MCF 10A (cell line): ENCODE measurements at regions of chr2 and their contacts with region 1.

Region 1: DNA sequence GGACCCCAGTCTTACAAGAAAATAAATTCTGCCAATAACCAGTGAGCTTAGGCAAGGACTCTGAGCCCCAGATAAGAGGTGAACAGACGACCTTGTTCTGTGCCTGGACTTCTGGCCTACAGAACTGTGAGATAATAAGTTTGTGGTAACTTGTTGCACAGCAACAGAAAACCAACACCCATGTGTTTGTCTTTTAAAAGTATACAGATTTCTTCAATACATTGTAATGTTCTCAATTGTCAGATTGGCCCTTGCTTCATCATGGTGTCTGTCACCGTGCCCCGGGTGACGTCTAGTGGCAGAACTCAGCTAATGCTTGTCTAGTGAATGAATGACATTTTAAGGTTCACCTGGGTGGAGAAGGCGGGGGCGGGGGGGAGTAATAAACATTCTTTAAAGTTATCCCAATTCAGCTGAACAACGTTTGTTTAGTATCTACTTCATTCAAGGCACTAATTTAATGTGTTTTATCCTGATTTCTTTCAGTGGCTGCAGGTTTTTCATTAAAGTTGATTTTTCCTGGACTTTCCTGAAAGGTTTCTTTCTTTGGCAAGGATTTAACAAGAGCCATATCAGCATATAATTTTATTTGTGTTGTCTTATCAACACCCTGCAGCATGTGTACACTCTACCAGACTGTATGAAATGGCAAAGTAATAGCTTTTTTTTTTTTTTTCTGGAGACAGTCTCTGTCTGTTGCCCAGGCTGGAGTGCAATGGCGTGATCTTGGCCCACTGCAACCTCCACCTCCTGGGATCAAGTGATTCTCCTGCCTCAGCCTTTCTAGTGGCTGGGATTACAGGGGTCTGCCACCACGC is 123.8 kb upstream of the DLX2 start:
- DNase-seq: no peak
- H3K4me3 Mint-ChIP-seq: no peak overlapping the region
- H3K27ac Mint-ChIP-seq: no peak overlapping the region
- H3K4me1 Mint-ChIP-seq: peaks cover 55% of the 10 kb centered on the region
- H3K27me3 Mint-ChIP-seq: no peaks in the 10 kb centered on the region
- CTCF ChIP-seq: peak; percentile 23

Region 2: DNA sequence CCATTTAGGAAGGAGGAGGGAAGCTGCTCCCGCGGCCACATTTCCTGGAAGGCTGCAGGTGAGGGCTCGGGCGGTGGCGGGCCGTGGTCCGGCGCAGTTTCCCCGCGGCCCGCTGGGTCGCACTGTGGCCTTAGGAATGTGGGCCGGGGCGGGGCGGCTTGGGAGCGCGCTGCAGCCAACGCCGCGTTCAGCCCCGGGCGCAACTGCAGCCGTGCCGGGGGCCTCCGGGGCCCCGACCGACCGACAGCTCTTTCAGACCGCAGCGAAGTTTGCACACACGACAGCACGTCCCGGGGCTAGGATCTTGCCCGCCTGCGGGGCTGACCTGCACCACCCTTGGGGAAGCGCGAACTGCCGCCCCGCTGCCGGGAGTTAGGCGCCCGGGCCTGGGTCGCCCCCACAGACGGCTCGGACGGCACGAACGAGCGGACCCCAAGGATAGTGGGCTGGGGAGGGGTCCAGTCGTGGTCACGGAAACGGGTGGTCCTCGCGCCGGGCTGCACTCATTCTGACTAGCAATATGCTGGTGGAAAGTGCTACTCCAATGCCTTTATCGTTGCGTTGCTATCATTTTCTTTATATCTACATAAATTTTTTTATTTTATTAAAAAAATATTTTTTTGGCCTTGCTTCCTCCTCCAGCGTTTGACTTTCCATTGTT is 53.8 kb before region 1 on chr2:
- CTCF ChIA-PET with region 1: interaction called, 54 read pairs
- POLR2A ChIA-PET with region 1: interaction called, 65 read pairs
- intact Hi-C with region 1: loop called (anchors 1 kb)
- DNase-seq: peak; percentile 74
- H3K4me3 Mint-ChIP-seq: peak overlapping the region; percentile 66
- H3K27ac Mint-ChIP-seq: no peak overlapping the region
- H3K4me1 Mint-ChIP-seq: no peaks in the 10 kb centered on the region
- H3K27me3 Mint-ChIP-seq: no peaks in the 10 kb centered on the region
- CTCF ChIP-seq: peak; percentile 93

Region 3: GRCh38 chr2:172179045-172179701 is 47.3 kb before region 1 on chr2:
- CTCF ChIA-PET with region 1: interaction called, 54 read pairs
- POLR2A ChIA-PET with region 1: interaction called, 65 read pairs
- intact Hi-C with region 1: loop called (anchors 1 kb)
- DNase-seq: peak; percentile 89
- H3K4me3 Mint-ChIP-seq: no peak overlapping the region
- H3K27ac Mint-ChIP-seq: peak overlapping the region; percentile 9
- H3K4me1 Mint-ChIP-seq: peaks cover 28% of the 10 kb centered on the region
- H3K27me3 Mint-ChIP-seq: no peaks in the 10 kb centered on the region
- CTCF ChIP-seq: no peak

Region 4: GRCh38 chr2:172208791-172209325 is 17.6 kb before region 1 on chr2:
- CTCF ChIA-PET with region 1: interaction called, 53 read pairs
- POLR2A ChIA-PET with region 1: interaction called, 220 read pairs
- intact Hi-C with region 1: no loop called
- DNase-seq: peak; percentile 56
- H3K4me3 Mint-ChIP-seq: peak overlapping the region; percentile 41
- H3K27ac Mint-ChIP-seq: peak overlapping the region; percentile 91
- H3K4me1 Mint-ChIP-seq: peaks cover 26% of the 10 kb centered on the region
- H3K27me3 Mint-ChIP-seq: no peaks in the 10 kb centered on the region
- CTCF ChIP-seq: no peak

Region 5: GRCh38 chr2:172215172-172215935 is 11.1 kb before region 1 on chr2:
- CTCF ChIA-PET with region 1: interaction called, 53 read pairs
- POLR2A ChIA-PET with region 1: interaction called, 220 read pairs
- intact Hi-C with region 1: no loop called
- DNase-seq: peak; percentile 60
- H3K4me3 Mint-ChIP-seq: no peak overlapping the region
- H3K27ac Mint-ChIP-seq: peak overlapping the region; percentile 81
- H3K4me1 Mint-ChIP-seq: peaks cover 20% of the 10 kb centered on the region
- H3K27me3 Mint-ChIP-seq: no peaks in the 10 kb centered on the region
- CTCF ChIP-seq: no peak

Region 6: DNA sequence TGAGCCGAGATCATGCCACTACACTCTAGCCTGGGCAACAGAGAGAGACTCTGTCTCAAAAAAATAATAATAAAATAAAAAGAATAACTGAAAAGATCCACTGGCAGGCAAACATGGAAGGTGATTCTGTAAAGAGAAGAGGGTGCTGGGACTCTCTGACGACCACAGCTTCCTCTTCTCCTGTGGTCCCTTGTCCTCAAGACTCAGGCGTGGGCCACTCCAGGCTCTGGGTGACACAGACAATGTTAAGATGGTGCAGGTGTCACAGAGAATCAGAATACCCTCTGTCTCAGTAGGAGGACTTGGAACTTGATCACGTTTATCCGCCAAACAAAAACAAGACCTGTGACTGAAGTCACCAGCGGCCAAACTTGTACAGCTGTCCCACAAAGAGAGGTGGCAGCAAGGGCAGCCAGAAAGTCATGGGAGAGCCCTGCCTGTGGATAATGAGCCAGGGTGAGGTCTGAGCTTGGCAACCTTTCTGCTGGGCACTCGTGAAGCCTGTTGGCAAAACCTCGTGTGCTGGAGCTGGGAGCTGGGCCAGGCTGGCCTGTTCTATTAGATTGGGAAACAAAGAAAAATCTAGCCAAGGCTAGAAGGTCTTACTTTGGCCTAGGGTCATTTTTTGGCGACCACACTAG is 124.5 kb after region 1 on chr2:
- CTCF ChIA-PET with region 1: no interaction called
- POLR2A ChIA-PET with region 1: no interaction called
- intact Hi-C with region 1: no loop called
- DNase-seq: no peak
- H3K4me3 Mint-ChIP-seq: no peak overlapping the region
- H3K27ac Mint-ChIP-seq: no peak overlapping the region
- H3K4me1 Mint-ChIP-seq: no peaks in the 10 kb centered on the region
- H3K27me3 Mint-ChIP-seq: no peaks in the 10 kb centered on the region
- CTCF ChIP-seq: no peak

Region 7: DNA sequence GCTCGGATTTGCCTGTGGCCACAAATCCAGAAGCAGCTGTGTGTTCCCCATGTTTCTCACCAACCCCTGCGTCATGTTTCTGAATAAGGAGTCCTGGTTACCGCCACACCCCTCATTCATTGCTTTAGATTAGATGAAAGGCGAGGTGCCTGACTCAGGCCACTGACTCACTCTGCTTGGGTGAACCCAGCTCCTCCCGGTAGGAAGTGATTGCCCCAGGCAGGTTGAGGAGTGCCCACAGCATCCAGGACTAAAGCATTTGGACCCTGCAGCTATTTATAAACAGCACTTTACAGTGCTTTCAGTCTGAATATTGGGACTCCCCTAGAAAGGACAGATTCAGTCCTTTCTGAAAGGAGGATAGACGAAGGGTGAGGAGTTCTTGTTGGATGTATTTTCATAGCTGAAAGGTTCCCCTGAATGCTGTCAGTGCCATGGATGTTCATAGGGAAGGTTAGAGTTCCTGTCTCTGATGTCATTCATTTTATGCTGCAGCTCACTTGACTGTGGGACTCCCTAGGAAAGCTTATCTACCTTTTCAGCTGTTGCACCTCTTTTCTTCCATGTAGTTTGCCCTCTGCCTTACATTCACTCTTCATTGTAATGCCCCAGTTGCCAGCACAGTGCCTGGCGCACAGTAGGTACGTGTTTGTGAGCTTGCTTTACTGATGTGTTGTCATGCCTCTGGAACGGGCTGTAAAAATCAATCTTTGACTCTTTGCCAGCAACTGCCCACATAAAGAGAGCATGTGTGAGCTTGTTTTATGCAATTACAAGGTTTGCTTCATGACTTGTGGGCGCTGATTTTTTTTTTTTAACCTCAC is 215.8 kb after region 1 on chr2:
- CTCF ChIA-PET with region 1: interaction called, 5 read pairs
- POLR2A ChIA-PET with region 1: interaction called, 89 read pairs
- intact Hi-C with region 1: no loop called
- DNase-seq: peak; percentile 99
- H3K4me3 Mint-ChIP-seq: peak overlapping the region; percentile 65
- H3K27ac Mint-ChIP-seq: peak overlapping the region; percentile 98
- H3K4me1 Mint-ChIP-seq: peaks cover 45% of the 10 kb centered on the region
- H3K27me3 Mint-ChIP-seq: no peaks in the 10 kb centered on the region
- CTCF ChIP-seq: no peak